H1 (cell line): ENCODE measurements at regions of chr9 and their contacts with region 1.

Region 1: GRCh38 chr9:136949817-136950655 is 2.0 kb upstream of the LCN12 start:
- DNase-seq: peak; percentile 84 to 99
- H3K4me3 ChIP-seq: peak overlapping the region; percentile 36 to 55 (median 49)
- H3K27ac ChIP-seq: peak overlapping the region; percentile 20; the same call in 1 of the 2 replicates
- H3K4me1 ChIP-seq: peaks cover 0 to 16% (median 11%) of the 10 kb centered on the region in 4 experiments; a peak in 5 of 7 replicates
- H3K27me3 ChIP-seq: no peaks in the 10 kb centered on the region
- CTCF ChIP-seq: no peak
- EP300 ChIP-seq: no peak
- POLR2A ChIP-seq: peak in 1 of 2 experiments; percentile 29; a peak in 1 of 3 replicates
- RAD21 ChIP-seq: no peak

Region 2: DNA sequence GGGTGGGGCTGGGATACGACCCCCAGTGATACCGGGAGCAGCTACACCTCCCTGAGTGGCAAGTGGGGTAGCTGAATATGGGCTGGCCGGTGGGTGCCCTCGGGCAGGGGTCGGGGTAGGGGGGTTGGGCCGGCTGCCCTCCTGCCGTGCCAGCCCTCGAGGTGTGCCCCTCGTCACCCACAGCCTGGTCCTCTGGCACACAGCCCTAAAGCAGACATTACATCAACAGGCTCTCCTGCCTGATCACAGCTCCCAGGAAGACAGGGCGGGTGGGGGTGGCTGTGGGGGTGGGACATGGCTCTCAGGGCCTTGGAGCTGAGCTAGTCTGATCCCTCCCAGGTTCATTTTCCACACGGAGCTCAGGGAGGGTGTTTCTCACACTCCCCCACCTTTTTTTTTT is 28.7 kb before region 1 on chr9:
- CTCF ChIA-PET with region 1: no interaction called
- POLR2A ChIA-PET with region 1: no interaction called
- DNase-seq: no peak
- H3K4me3 ChIP-seq: no peak overlapping the region
- H3K27ac ChIP-seq: no peak overlapping the region
- H3K4me1 ChIP-seq: no peaks in the 10 kb centered on the region
- H3K27me3 ChIP-seq: no peaks in the 10 kb centered on the region
- CTCF ChIP-seq: no peak
- EP300 ChIP-seq: no peak
- POLR2A ChIP-seq: no peak
- RAD21 ChIP-seq: no peak

Region 3: DNA sequence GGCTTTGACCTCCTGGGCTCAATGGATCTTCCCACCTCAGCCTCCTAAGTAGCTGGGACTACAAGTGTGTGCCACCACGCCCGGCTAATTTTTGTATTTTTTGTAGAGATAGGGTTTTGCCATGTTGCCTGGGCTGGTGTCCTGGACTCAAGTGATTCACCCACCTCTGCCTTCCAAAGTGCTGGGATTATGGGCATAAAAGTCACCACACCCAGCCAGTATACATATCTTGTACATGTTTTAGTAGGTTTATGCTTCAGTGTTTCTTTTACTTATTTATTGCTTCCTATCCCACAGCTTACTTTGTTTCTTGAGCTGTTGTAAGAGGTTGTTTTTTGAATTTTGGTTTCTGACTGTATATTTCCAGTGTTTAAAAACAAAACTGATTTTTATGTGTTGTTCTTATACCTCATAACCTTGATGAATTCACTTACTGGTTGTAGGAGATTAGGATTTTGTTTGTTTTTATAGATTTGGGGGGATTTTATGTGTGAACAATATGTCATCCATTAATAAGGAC is 18.4 kb before region 1 on chr9:
- CTCF ChIA-PET with region 1: interaction called, 10 read pairs
- POLR2A ChIA-PET with region 1: no interaction called
- DNase-seq: no peak
- H3K4me3 ChIP-seq: no peak overlapping the region
- H3K27ac ChIP-seq: no peak overlapping the region
- H3K4me1 ChIP-seq: peaks cover 0 to 6% (median 0%) of the 10 kb centered on the region in 4 experiments; a peak in 2 of 7 replicates
- H3K27me3 ChIP-seq: no peaks in the 10 kb centered on the region
- CTCF ChIP-seq: no peak
- EP300 ChIP-seq: no peak
- POLR2A ChIP-seq: no peak
- RAD21 ChIP-seq: no peak

Region 4: GRCh38 chr9:136971710-136972109 is 21.7 kb after region 1 on chr9:
- CTCF ChIA-PET with region 1: interaction called, 45 read pairs
- POLR2A ChIA-PET with region 1: no interaction called
- DNase-seq: no peak
- H3K4me3 ChIP-seq: no peak overlapping the region
- H3K27ac ChIP-seq: no peak overlapping the region
- H3K4me1 ChIP-seq: no peaks in the 10 kb centered on the region
- H3K27me3 ChIP-seq: no peaks in the 10 kb centered on the region
- CTCF ChIP-seq: no peak
- EP300 ChIP-seq: no peak
- POLR2A ChIP-seq: no peak
- RAD21 ChIP-seq: no peak

Region 5: DNA sequence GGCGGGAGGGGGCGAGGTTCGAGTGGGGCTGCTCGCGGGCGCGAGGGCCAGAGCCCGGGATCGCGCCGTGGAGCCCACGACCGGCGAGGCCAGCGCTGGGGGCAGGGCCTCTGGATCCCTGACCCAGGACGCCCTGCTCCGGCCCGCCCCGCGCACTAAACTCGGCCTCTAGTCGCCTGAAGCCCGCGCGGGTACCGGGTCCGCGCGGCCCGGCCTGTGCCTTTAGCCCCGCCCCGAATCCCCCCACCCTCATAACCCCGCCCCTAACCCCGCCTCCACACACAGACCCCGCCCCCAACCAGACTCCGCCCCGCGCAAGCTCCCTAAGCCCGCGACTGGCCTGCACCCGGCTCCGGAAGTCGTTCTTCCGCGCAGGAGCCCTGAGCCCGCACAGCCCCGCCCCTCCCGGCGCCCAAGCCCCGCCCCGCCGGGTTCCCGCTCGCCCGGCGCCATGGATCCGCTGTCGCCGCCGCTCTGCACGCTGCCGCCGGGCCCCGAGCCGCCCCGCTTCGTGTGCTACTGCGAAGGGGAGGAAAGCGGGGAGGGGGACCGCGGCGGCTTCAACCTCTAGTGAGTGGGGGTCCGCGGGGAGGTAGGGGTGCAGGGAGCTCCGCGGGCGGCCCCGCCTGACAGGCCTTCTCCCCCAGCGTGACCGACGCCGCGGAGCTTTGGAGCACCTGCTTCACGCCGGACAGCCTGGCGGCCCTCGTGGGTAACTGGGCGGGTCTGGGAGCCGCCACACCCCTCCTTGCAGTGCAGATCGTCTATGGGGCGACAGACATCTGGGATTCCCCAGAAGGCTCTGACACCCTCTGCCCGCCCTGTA is 42.2 kb after region 1 on chr9 and contains the start of gene PAXX:
- CTCF ChIA-PET with region 1: interaction called, 31 read pairs
- POLR2A ChIA-PET with region 1: interaction called, 3 read pairs
- DNase-seq: peak; percentile 65 to 96
- H3K4me3 ChIP-seq: peak within 1 kb of the TSS; percentile 46 to 89 (median 74)
- H3K27ac ChIP-seq: peak within 1 kb of the TSS; percentile 3; the same call in 1 of the 2 replicates
- H3K4me1 ChIP-seq: peaks cover 0 to 16% (median 7%) of the 10 kb centered on the region in 4 experiments; a peak in 6 of 7 replicates
- H3K27me3 ChIP-seq: peaks cover 0 to 17% (median 12%) of the 10 kb centered on the region in 4 experiments; a peak in 3 of 7 replicates
- CTCF ChIP-seq: no peak
- EP300 ChIP-seq: no peak
- POLR2A ChIP-seq: no peak; a peak in 1 of 3 replicates
- RAD21 ChIP-seq: no peak
- total RNA-seq, gene PAXX: 40.8 and 43.4 TPM in 2 replicates

Region 6: GRCh38 chr9:137064027-137064879 is 114.2 kb after region 1 on chr9:
- CTCF ChIA-PET with region 1: interaction called, 13 read pairs
- POLR2A ChIA-PET with region 1: no interaction called
- DNase-seq: peak in 1 of 2 experiments; percentile 95
- H3K4me3 ChIP-seq: no peak overlapping the region
- H3K27ac ChIP-seq: no peak overlapping the region
- H3K4me1 ChIP-seq: peaks cover 0 to 13% (median 7%) of the 10 kb centered on the region in 4 experiments; a peak in 5 of 7 replicates
- H3K27me3 ChIP-seq: peaks cover 0 to 8% (median 2%) of the 10 kb centered on the region in 4 experiments; a peak in 5 of 7 replicates
- CTCF ChIP-seq: peak in 2 of 3 experiments; percentile 88 to 95; a peak in 3 of 4 replicates
- EP300 ChIP-seq: no peak
- POLR2A ChIP-seq: no peak
- RAD21 ChIP-seq: peak; percentile 61 to 72